Mucosa of descending colon (tissue), 3 donors: ENCODE measurements at regions of chr4 and their contacts with region 1.

Region 1: DNA sequence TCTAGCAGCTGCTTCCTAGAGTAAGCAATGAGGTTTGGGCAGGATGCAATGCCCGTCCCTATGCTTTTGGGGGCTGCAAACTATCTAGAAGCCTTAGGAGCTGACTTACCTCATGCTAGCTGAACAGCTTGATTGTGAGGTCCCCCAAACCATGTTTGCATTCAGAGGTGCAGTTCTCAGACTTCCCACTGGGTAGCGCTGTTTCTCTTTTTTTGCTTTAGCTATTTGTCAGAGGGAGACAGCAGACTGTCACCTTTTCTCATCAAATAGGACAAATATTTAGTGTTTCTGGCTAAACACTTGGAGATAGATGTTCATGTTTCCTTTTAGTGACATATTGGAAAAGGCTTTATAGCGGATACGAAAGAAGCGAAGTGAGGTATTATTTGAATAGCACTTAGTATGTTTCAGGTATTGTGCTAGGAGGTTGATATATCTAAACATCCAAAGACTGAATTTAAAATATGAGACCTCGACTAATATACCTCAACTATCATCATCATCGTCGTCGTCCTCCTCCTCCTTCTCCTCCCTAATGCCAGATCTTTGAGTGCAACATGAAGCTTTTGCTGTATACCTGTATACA is 18.7 kb upstream of the TMEM192 start:
- DNase-seq: peak in 2 of 3 donors; percentile 37 to 79
- ATAC-seq: peak; percentile 75
- H3K4me3 ChIP-seq: no peak overlapping the region
- H3K4me1 ChIP-seq: no peaks in the 10 kb centered on the region
- CTCF ChIP-seq: peak; percentile 84

Region 2: GRCh38 chr4:164700471-164700870 is 430.9 kb before region 1 on chr4:
- intact Hi-C with region 1: no loop called
- DNase-seq: peak in 1 of 3 donors; percentile 35
- ATAC-seq: peak; percentile 37
- H3K4me3 ChIP-seq: no peak overlapping the region
- H3K4me1 ChIP-seq: no peaks in the 10 kb centered on the region
- CTCF ChIP-seq: no peak

Region 3: DNA sequence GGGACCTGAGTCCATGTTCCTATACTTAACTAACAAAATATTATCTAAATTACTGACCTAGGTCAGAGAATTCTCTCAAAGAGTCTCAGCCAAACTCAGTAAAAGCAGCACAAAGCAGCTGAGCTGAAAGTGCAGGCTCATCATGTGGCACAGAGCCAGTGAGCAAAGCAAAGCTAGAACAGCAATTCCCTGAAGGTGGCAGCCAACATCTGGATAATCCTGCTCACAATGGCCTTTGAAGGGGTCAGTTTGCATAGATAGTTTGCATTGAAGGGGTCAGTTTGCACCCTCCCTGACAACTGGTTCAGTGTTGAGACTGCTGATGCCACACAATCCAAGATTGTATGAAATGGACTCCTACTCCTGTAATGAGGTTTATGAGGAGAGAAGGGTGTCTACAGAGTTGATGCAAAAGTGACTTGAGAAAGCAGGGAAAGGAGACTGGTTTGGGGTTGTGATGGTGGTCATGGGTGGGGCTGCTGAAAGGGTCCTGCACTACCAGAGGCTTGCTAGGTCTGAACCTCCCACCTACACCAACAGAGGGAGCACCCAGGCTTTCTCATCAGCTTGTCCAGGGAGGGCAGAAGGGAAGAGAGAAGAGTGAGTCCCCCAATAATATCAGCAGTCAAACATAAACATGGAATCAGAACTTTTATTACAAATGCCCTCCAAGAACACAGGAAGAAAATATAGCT is 193.6 kb before region 1 on chr4:
- intact Hi-C with region 1: no loop called
- DNase-seq: peak in 1 of 3 donors; percentile 12
- ATAC-seq: no peak
- H3K4me3 ChIP-seq: no peak overlapping the region
- H3K4me1 ChIP-seq: no peaks in the 10 kb centered on the region
- CTCF ChIP-seq: no peak

Region 4: DNA sequence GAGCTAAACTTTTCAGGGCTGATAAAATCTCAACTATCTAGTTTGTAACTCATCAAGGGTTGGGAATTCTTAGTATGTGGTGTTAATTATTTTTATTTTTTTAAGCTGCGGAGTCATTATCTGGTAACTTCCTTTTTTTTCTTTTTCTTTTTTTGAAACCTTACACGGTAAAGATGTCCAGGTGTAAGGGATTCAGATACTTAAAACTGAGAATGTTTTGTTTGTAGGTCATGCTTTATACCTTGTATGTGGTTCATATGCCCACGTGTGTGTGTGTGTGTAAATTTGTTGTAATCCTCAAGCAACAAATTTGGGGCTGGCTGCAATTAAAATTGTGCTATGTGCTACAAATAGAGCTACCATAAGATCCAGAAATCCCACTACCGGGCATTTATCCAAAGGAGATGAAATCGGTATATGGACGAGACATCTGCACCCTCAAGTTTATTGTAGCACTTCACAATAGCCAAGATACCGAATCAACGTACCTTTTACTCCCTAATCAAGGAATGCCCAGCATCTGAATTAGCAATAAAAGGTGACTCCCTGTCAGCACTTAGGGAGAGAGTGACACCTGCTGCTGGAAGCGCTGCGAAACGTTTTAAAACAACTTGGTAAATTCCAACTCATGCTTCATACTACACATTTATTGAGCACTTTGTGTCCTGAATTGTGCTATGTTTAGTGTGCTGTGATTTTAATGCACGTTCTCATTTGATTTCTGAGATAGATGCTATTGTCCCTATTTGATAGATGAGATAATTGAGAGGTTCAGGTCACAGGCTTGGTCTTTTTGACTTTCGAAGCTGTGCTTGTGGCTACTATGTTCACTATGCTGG is 212.2 kb after region 1 on chr4:
- intact Hi-C with region 1: loop called in 1 of 2 experiments (anchors 10 kb)
- DNase-seq: peak in 1 of 3 donors; percentile 42
- ATAC-seq: peak; percentile 58
- H3K4me3 ChIP-seq: no peak overlapping the region
- H3K4me1 ChIP-seq: no peaks in the 10 kb centered on the region
- CTCF ChIP-seq: no peak

Region 5: GRCh38 chr4:165464813-165465381 is 333.6 kb after region 1 on chr4:
- intact Hi-C with region 1: loop called (anchors 5 kb)
- DNase-seq: peak in 1 of 3 donors; percentile 11
- ATAC-seq: peak; percentile 65
- H3K4me3 ChIP-seq: no peak overlapping the region
- H3K4me1 ChIP-seq: no peaks in the 10 kb centered on the region
- CTCF ChIP-seq: peak; percentile 37